GM23248 (cell line): ENCODE measurements at regions of chr20 and their contacts with region 1.

Region 1: GRCh38 chr20:45044084-45044573 is 56.8 kb downstream of the KCNS1 start:
- DNase-seq: peak; percentile 90
- H3K4me3 ChIP-seq: no peak overlapping the region
- H3K27ac ChIP-seq: 0 out of 2 replicates have a peak overlapping the region, but pooled peaks have one; percentile 2
- H3K4me1 ChIP-seq: peaks cover 58% of the 10 kb centered on the region
- H3K27me3 ChIP-seq: no peaks in the 10 kb centered on the region

Region 2: DNA sequence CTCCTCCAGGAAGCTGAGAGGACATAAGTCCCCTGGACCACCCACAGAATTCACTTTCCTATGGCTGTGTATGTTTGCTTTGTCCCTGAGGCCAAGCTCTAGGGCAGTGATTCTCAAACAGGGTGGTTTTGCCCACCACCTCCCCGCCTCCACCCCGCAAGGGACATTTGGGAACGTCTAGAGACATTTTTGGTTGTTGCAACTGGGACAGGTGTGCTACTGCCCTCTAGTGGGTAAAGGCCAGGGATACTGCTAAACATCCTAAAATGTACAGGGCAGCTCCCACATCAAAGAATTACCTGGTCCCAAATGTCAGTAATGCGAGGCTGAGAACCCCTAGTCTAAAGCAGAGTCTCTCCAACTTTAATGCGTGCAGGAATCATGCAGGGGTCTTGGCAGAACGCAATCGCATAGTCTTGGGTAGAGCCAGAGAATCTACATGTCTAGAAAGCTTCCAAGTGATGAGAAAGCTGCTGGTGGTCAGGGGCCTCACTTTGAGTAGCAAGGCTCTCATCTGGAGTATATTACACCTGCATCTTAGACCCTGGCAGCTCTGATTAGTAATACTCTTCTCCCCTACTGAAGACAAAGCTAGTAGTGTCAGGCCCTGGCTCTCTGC is 51.7 kb after region 1 on chr20:
- in situ Hi-C with region 1: loop called (anchors 10 kb)
- DNase-seq: peak; percentile 66
- H3K4me3 ChIP-seq: no peak overlapping the region
- H3K27ac ChIP-seq: no peak overlapping the region
- H3K4me1 ChIP-seq: peaks cover 5% of the 10 kb centered on the region
- H3K27me3 ChIP-seq: 0 out of 2 replicates have a peak, but pooled peaks cover 3% of the 10 kb centered on the region

Region 3: GRCh38 chr20:45293041-45294002 is 249.2 kb after region 1 on chr20:
- in situ Hi-C with region 1: loop called (anchors 25 kb)
- DNase-seq: peak; percentile 82
- H3K4me3 ChIP-seq: peak overlapping the region; percentile 74
- H3K27ac ChIP-seq: no peak overlapping the region
- H3K4me1 ChIP-seq: no peaks in the 10 kb centered on the region
- H3K27me3 ChIP-seq: no peaks in the 10 kb centered on the region

Region 4: GRCh38 chr20:45358282-45359068 is 314.3 kb after region 1 on chr20:
- in situ Hi-C with region 1: no loop called
- DNase-seq: peak; percentile 95
- H3K4me3 ChIP-seq: peak overlapping the region; percentile 17; the same call in 1 of the 2 replicates
- H3K27ac ChIP-seq: peak overlapping the region; percentile 63
- H3K4me1 ChIP-seq: peaks cover 37% of the 10 kb centered on the region
- H3K27me3 ChIP-seq: no peaks in the 10 kb centered on the region

Region 5: DNA sequence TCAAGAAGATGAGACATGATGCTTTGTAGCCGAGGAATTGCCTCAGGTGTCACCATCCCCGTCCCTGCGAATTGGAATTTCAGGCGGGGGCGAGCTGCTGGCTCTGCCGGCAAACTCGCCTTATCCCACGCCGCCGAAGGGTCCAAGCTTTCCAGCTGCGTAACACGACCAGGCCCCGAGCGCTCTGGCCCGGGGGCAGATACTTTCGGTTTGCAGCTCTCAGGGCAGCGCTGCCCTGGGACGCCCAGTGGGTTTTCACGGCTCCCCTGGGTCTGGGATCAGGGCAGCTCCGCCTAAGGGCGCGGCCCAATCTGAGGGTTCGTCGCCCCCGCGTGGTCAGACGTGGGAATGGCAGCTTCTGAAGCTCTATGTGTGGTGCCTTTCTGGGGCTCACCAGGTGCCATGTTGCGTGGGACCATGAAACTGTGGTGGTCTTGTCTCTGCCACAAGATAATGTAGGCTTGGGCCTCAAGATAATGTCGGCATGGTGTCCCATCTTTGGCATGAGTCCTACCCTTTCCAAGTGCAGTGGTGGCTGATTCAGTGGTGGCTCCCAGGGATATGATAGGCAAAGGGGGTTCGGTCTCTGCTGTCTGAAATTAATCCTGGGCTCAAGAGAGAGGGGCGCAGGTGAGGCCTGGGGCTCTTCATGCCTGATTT is 392.7 kb after region 1 on chr20:
- in situ Hi-C with region 1: loop called (anchors 25 kb)
- DNase-seq: peak; percentile 95
- H3K4me3 ChIP-seq: peak overlapping the region; percentile 77
- H3K27ac ChIP-seq: peak overlapping the region; percentile 50
- H3K4me1 ChIP-seq: no peaks in the 10 kb centered on the region
- H3K27me3 ChIP-seq: no peaks in the 10 kb centered on the region

Region 6: GRCh38 chr20:45545754-45546453 is 501.8 kb after region 1 on chr20:
- in situ Hi-C with region 1: no loop called
- DNase-seq: peak; percentile 75
- H3K4me3 ChIP-seq: no peak overlapping the region
- H3K27ac ChIP-seq: no peak overlapping the region
- H3K4me1 ChIP-seq: no peaks in the 10 kb centered on the region
- H3K27me3 ChIP-seq: peaks cover 21% of the 10 kb centered on the region